Mammary epithelial cell (primary cell): ENCODE measurements at regions of chr17 and their contacts with region 1.

Region 1: GRCh38 chr17:17237026-17237799 is at the start of gene FLCN:
- DNase-seq: peak; percentile 81
- H3K4me3 ChIP-seq: peak within 1 kb of the TSS; percentile 68 to 78 (median 71)
- H3K27ac ChIP-seq: peak within 1 kb of the TSS; percentile 97
- H3K4me1 ChIP-seq: peaks cover 12% of the 10 kb centered on the region
- H3K27me3 ChIP-seq: no peaks in the 10 kb centered on the region
- CTCF ChIP-seq: no peak
- total RNA-seq, gene FLCN: 41.7 to 59.0 TPM

Region 2: GRCh38 chr17:17132746-17133145 is 104.5 kb before region 1 on chr17:
- CTCF ChIA-PET with region 1: no interaction called
- dilution Hi-C with region 1: loop called (anchors 5 kb)
- in situ Hi-C with region 1: no loop called
- intact Hi-C with region 1: no loop called
- DNase-seq: no peak
- H3K4me3 ChIP-seq: no peak overlapping the region
- H3K27ac ChIP-seq: no peak overlapping the region
- H3K4me1 ChIP-seq: peaks cover 6% of the 10 kb centered on the region
- H3K27me3 ChIP-seq: no peaks in the 10 kb centered on the region
- CTCF ChIP-seq: no peak

Region 3: GRCh38 chr17:17344462-17345293 is 107.5 kb after region 1 on chr17:
- CTCF ChIA-PET with region 1: no interaction called
- dilution Hi-C with region 1: no loop called
- in situ Hi-C with region 1: no loop called
- intact Hi-C with region 1: no loop called
- DNase-seq: no peak
- H3K4me3 ChIP-seq: no peak overlapping the region
- H3K27ac ChIP-seq: no peak overlapping the region
- H3K4me1 ChIP-seq: no peaks in the 10 kb centered on the region
- H3K27me3 ChIP-seq: no peaks in the 10 kb centered on the region
- CTCF ChIP-seq: no peak